Activated CD4-positive, alpha-beta memory T cell treated with anti-CD3 and anti-CD28 coated beads for 36 hours (primary cell): ENCODE measurements at regions of chr1 and their contacts with region 1.

Region 1: GRCh38 chr1:41720861-41721410 is 197.8 kb downstream of the HIVEP3 start:
- DNase-seq: peak; percentile 44
- H3K4me3 Mint-ChIP-seq: peak overlapping the region; percentile 2
- H3K27ac Mint-ChIP-seq: peak overlapping the region; percentile 19
- H3K4me1 Mint-ChIP-seq: peaks cover 36% of the 10 kb centered on the region
- H3K27me3 Mint-ChIP-seq: no peaks in the 10 kb centered on the region

Region 2: DNA sequence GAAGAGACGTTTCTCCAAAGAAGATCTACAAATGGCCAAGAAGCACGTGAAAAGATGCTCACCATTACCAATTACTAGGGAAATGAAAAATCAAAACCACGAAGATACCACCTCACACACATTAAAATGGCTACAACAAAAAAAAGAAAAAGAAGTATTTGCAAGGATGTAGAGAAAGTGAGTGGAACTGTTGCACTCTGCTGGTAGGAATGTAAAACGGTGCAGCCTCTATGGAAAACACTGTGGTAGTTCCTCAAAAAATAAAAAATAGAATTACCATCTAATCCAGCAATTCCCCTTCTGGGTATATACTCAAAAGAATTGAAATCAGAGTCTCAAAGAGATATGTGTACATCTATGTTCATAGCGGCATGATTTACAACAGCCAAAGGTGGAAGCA is 121.0 kb before region 1 on chr1:
- CTCF ChIA-PET with region 1: no interaction called
- POLR2A ChIA-PET with region 1: no interaction called
- intact Hi-C with region 1: no loop called
- DNase-seq: no peak
- H3K4me3 Mint-ChIP-seq: no peak overlapping the region
- H3K27ac Mint-ChIP-seq: no peak overlapping the region
- H3K4me1 Mint-ChIP-seq: peaks cover 45% of the 10 kb centered on the region
- H3K27me3 Mint-ChIP-seq: no peaks in the 10 kb centered on the region

Region 3: DNA sequence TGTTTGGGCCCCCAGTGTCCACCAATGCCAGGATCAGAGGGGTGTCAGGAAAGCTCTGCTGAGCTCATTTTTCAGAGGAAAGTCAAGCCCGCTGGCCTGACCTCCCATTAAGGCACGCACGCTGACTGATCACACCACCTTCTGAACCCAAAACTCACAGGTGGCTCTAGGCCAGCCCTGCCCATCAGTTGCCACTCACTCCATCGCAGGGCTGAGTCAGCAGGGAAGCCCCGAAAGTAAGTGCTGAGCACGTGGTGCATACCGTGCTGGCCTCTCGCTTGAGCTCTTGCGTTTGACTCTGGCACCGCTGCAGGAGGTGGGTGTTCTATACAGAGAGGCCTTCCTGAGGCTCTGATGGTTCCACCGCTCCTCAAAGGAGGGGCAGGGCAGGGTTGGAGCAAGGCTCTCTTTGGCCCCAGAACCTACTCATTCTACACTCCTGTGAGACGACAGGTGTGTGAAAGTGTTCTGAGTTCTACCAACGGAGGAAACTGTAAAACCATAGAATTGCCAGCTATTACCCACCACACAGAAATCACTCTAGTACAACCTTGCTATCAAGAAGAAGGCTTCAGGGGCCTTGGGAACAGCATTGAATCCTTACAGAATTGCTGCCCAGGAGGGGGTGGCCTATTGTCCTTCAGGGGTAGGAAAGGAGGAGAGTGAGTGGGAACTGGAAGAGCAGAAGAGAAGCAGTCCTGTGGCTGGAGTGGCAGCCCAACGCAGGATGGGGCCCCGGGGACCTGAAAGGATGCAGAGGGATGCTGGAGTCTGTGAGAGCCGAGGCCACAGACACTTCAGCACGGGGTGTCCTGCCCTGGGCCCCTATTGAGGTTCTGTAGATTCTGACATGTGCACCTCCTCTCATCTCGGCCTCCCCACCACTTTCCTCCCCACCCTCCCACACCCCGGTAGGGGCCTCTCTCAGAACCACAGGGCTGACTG is 21.7 kb before region 1 on chr1:
- CTCF ChIA-PET with region 1: no interaction called
- POLR2A ChIA-PET with region 1: no interaction called
- intact Hi-C with region 1: loop called (anchors 2 kb)
- DNase-seq: peak; percentile 64
- H3K4me3 Mint-ChIP-seq: no peak overlapping the region
- H3K27ac Mint-ChIP-seq: no peak overlapping the region
- H3K4me1 Mint-ChIP-seq: peaks cover 13% of the 10 kb centered on the region
- H3K27me3 Mint-ChIP-seq: no peaks in the 10 kb centered on the region

Region 4: GRCh38 chr1:41773144-41773591 is 52.2 kb after region 1 on chr1:
- CTCF ChIA-PET with region 1: no interaction called
- POLR2A ChIA-PET with region 1: no interaction called
- intact Hi-C with region 1: no loop called
- DNase-seq: no peak
- H3K4me3 Mint-ChIP-seq: no peak overlapping the region
- H3K27ac Mint-ChIP-seq: no peak overlapping the region
- H3K4me1 Mint-ChIP-seq: peaks cover 5% of the 10 kb centered on the region
- H3K27me3 Mint-ChIP-seq: no peaks in the 10 kb centered on the region